Activated naive CD4-positive, alpha-beta T cell treated with anti-CD3 and anti-CD28 coated beads for 36 hours (primary cell): ENCODE measurements at regions of chr9 and their contacts with region 1.

Region 1: DNA sequence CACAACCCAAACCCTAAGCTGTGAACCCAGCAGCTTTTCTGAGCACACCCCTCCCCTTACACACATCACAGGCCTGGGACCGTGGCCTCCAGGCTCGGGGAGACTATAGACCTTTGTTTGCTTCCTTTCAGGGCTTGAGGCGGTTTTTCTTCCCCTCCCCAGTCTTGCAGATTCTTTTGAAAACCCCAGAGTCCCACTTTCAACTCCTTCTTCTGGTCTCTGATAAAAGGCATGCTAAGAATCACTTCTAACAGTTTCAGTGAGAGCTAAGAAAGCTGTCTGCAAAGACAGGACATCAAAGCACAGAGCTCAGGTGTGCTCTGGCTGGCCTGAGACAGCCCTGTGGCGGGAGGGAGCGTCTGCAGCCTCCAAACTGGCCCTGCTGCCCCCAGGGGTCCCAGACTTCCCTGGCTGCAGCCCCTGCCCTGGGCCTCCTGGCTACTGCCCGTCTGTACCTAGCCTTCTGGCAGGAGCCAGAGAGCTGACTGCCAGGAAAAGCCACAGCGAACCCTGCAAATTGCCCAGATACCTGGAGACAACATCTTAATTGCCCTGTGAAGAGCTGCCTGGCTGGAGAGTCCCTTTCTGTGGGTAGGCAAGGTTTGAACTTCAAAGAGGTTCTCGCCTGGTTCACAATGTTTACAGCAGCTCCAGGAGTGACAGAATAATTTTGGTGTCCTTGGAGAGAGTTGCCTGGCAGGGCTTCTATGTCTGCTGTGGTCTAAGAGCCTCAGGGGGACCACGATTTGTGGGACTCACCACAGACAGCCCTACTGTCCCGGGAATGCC is 139.0 kb downstream of the GADD45G start:
- DNase-seq: peak; percentile 69
- H3K4me3 Mint-ChIP-seq: no peak overlapping the region
- H3K27ac Mint-ChIP-seq: peak overlapping the region; percentile 85
- H3K4me1 Mint-ChIP-seq: peaks cover 70% of the 10 kb centered on the region
- H3K27me3 Mint-ChIP-seq: no peaks in the 10 kb centered on the region

Region 2: GRCh38 chr9:89597711-89598625 is 145.8 kb before region 1 on chr9:
- CTCF ChIA-PET with region 1: interaction called, 12 read pairs
- intact Hi-C with region 1: loop called (anchors 1 kb)
- DNase-seq: peak; percentile 74
- H3K4me3 Mint-ChIP-seq: no peak overlapping the region
- H3K27ac Mint-ChIP-seq: no peak overlapping the region
- H3K4me1 Mint-ChIP-seq: no peaks in the 10 kb centered on the region
- H3K27me3 Mint-ChIP-seq: no peaks in the 10 kb centered on the region

Region 3: GRCh38 chr9:89661956-89662717 is 81.6 kb before region 1 on chr9:
- CTCF ChIA-PET with region 1: no interaction called
- intact Hi-C with region 1: no loop called
- DNase-seq: no peak
- H3K4me3 Mint-ChIP-seq: no peak overlapping the region
- H3K27ac Mint-ChIP-seq: no peak overlapping the region
- H3K4me1 Mint-ChIP-seq: no peaks in the 10 kb centered on the region
- H3K27me3 Mint-ChIP-seq: no peaks in the 10 kb centered on the region

Region 4: DNA sequence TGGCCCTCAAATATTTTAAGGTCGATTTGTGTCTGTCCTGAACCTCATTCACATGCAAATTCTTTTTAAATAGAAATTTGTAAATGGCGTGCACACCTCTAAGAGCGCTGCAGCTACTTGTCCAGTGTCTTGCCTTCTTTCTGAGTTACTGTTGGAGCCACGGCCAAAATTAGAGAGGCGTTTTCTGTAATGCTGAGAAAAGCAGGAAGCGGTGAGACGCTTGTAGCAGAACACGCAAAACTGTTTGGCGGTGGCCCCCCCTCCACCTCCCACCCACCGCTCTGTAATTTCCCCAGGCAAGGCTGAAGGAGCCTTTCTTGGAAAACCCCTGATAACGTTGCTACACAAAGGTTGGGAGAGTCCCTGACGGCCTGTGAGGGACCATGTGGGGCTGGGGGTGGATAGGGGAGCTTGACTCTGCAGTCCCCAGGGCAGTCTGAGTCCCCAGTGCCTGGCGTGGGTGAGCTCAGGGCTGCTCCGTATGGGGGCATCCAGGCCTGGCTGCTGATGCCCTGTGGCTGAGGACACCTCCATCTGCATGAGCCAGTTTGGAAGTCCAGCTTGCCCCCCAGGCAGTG is 42.5 kb before region 1 on chr9:
- CTCF ChIA-PET with region 1: interaction called, 6 read pairs
- intact Hi-C with region 1: loop called (anchors 1 kb)
- DNase-seq: peak; percentile 93
- H3K4me3 Mint-ChIP-seq: peak overlapping the region; percentile 50
- H3K27ac Mint-ChIP-seq: peak overlapping the region; percentile 85
- H3K4me1 Mint-ChIP-seq: peaks cover 30% of the 10 kb centered on the region
- H3K27me3 Mint-ChIP-seq: no peaks in the 10 kb centered on the region

Region 5: DNA sequence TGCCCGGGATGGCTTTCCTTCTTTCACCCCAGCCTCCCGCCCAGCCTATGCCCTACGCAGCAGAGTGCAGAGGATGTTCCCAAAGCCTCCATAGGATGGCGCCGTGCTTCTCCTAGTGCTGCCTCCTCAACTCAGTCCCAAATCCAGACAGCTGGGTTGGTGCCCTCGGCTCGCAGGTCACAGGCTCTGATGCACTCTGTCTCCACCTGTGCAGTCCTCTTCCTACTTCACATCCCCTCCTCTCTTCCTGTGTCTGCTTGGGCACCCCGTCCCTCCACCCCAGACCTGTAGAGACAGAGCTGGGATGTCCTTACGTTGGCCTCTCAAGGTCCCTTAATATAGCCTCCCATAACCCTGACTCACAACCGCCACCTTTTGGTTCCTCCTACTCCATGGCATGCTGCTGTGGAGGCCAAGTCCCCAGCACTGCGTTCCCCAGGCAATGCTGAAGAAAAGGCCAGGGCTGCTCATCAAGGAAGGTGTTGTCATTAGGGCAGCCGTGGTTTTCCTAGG is 175.5 kb after region 1 on chr9:
- CTCF ChIA-PET with region 1: no interaction called
- intact Hi-C with region 1: loop called (anchors 5 kb)
- DNase-seq: peak; percentile 73
- H3K4me3 Mint-ChIP-seq: no peak overlapping the region
- H3K27ac Mint-ChIP-seq: no peak overlapping the region
- H3K4me1 Mint-ChIP-seq: peaks cover 14% of the 10 kb centered on the region
- H3K27me3 Mint-ChIP-seq: peaks cover 2% of the 10 kb centered on the region